PC-3 (cell line): ENCODE measurements at regions of chr14 and their contacts with region 1.

Region 1: DNA sequence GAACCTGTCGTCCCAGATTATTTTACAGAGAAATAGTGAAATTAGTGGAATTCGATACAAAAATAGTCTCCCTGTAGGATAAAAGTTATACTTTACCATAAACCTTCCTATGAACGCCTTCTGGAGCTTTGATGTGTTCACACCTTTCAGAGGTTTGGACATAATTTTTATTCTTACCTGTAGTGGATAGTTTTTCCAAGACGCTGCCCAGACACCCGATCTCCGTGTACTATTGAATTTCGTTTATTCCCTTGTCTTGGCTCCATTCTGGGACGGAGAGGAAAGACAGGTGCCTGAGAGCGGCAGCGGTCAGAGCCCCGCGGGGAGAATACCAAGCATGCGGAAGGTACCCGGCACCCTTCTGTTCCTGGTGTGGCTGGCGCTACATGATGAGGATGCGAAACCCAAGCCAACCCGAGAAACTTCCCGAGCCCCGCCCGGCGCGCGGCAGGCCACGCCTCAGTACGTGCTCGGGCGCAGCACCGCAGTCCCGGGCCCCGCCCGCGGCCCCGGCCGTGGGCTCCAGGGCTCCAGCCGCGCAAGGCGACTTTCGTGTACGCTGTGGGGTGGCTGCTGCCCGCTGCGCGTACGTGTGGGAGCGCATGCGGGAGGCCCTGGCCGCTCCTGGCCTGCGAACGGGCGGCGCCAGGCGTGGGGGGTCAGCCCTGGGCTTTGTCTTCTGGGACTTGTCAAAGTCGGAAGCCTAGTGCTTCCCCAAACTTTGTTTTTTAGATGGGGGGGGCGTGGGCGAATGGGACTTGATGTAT is 11.3 kb upstream of the SNAPC1 start:
- DNase-seq: peak; percentile 99
- ATAC-seq: peak; percentile 79
- H3K4me3 ChIP-seq: peak overlapping the region; percentile 72
- H3K27ac ChIP-seq: peak overlapping the region; percentile 55
- H3K4me1 ChIP-seq: peaks cover 79% of the 10 kb centered on the region
- H3K27me3 ChIP-seq: no peaks in the 10 kb centered on the region
- CTCF ChIP-seq: no peak

Region 2: DNA sequence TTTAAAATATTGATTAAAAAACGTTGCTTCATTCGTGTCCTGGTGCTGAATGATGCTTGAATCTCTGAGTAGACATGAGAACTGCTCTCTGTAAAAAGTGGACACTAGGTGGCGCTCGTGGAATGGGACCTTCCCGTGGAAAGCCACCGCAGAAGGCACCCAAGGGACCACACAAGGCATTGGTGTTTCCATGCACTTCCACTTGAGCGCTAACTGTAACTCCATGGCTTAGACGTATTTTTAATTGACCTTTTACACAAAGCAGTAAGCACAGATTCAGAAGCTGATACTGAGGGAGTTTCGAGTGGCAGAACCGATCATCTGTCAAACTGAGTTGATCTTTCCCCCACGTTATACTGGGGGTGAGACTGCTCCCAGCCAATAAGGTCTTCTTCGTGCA is 294.2 kb before region 1 on chr14:
- CTCF ChIA-PET with region 1: interaction called, 7 read pairs
- POLR2A ChIA-PET with region 1: no interaction called
- intact Hi-C with region 1: loop called (anchors 1 kb)
- DNase-seq: peak; percentile 95
- ATAC-seq: peak; percentile 88
- H3K4me3 ChIP-seq: no peak overlapping the region
- H3K27ac ChIP-seq: no peak overlapping the region
- H3K4me1 ChIP-seq: peaks cover 13% of the 10 kb centered on the region
- H3K27me3 ChIP-seq: no peaks in the 10 kb centered on the region
- CTCF ChIP-seq: peak; percentile 96

Region 3: DNA sequence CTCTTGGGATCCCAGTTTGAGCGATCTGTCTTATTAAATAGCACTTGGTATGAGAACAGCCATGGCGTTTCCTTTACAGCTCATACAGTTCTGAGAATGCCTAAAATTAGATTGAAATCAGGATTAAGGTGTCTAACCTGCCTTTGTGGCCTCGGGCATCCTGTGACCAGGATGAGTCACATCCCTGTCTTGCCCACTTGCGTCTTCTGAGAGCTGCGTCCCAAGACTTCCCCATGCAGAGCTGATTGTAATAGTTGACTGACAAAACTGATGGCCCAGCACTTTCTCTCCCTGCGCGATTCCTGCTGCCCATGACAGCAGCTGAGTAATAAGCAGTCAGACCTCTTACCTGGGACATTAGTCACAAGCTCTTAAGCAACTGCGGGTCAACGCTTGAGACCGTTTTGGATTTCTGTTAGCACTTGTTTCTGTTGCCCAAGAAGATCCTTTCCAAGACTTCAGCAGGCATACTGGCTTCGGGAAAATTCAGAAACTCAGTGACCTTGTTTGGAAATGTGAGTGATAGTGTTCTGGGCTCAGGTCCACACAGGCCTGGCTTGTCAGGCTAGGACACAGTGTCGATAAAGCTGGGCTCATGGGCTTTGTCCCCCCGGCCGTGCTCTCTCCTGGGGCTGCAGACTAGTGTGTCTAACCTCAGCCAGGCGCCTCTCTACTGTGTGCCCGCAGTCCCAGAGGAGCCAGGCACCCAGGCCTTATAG is 225.4 kb before region 1 on chr14:
- CTCF ChIA-PET with region 1: no interaction called
- POLR2A ChIA-PET with region 1: interaction called, 10 read pairs
- intact Hi-C with region 1: no loop called
- DNase-seq: peak; percentile 100
- ATAC-seq: peak; percentile 73
- H3K4me3 ChIP-seq: peak overlapping the region; percentile 27; the same call in 1 of the 2 replicates
- H3K27ac ChIP-seq: peak overlapping the region; percentile 95
- H3K4me1 ChIP-seq: peaks cover 66% of the 10 kb centered on the region
- H3K27me3 ChIP-seq: no peaks in the 10 kb centered on the region
- CTCF ChIP-seq: no peak

Region 4: DNA sequence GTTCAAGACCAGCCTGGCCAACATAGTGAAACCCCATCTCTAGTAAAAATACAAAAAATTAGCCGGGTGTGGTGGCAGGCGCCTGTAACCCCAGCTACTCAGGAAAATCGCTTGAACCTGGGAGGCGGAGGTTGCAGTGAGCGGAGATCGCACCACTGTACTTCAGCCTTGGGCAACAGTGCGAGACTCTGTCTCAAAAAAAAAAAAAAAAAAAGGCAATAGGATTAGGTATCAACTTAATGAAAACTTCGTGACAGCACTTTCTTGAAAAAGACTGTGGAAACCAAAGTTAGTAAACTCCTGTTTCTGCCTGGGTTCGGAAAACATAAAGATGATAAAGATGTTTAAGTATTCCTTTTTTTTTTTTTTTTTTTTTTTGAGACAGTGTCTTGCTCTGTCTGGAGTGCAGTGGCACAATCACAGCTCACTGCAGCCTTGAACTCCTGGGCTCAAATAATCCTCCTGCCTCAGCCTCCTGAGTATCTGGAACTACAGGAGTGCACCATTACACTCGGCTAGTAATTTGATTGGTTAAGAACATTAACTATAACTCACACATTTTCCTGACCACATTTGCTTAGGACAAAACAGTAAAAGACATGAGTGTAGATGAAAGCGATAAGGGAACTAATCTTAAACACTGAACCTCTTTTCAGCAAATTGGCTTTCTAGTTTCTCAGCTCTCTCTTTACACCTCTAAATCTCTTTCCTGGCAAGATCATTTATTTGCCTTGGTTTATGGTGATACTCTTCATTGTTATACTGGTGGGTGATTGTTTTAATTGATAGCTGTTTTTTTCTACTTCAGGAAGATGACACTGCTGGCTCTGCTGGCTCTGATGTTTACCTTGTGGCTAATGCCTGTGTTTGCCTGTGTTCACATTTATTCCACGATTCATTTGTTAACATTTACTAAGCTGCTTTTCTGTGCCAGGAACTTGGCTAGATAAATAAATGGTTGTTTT is 39.8 kb before region 1 on chr14:
- CTCF ChIA-PET with region 1: no interaction called
- POLR2A ChIA-PET with region 1: no interaction called
- intact Hi-C with region 1: loop called (anchors 2 kb)
- DNase-seq: peak; percentile 82
- ATAC-seq: peak; percentile 87
- H3K4me3 ChIP-seq: no peak overlapping the region; the same call in 1 of the 2 replicates
- H3K27ac ChIP-seq: peak overlapping the region; percentile 38
- H3K4me1 ChIP-seq: peaks cover 51% of the 10 kb centered on the region
- H3K27me3 ChIP-seq: no peaks in the 10 kb centered on the region
- CTCF ChIP-seq: no peak

Region 5: GRCh38 chr14:61761959-61762786 is 11.3 kb after region 1 on chr14 and contains the start of gene SNAPC1:
- CTCF ChIA-PET with region 1: interaction called, 4 read pairs
- POLR2A ChIA-PET with region 1: interaction called, 21 read pairs
- intact Hi-C with region 1: loop called (anchors 1 kb)
- DNase-seq: peak; percentile 100
- ATAC-seq: peak; percentile 86
- H3K4me3 ChIP-seq: peak within 1 kb of the TSS; percentile 96
- H3K27ac ChIP-seq: peak within 1 kb of the TSS; percentile 55
- H3K4me1 ChIP-seq: peaks cover 32% of the 10 kb centered on the region
- H3K27me3 ChIP-seq: no peaks in the 10 kb centered on the region
- CTCF ChIP-seq: no peak
- total RNA-seq, gene SNAPC1: 26.7 and 27.3 TPM in 2 replicates

Region 6: DNA sequence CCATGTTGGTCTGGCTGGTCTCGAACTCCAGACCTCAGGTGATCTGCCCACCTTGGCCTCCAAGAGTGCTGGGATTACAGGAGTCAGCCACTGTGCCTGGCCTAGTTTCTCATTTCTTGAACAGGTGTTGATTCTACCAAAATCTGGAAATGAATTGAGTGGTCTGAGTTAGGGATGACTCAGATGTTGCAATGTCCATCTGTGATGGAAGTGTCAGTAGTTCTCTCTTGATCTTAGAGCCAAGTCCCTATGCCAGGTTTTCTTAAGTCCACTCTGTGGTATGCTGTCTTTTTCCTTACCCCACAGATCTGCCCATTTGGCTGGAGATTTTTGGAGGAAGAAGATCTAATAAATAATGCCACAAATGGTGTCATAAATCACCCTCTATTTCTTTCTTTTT is 24.0 kb after region 1 on chr14:
- CTCF ChIA-PET with region 1: no interaction called
- POLR2A ChIA-PET with region 1: no interaction called
- intact Hi-C with region 1: no loop called
- DNase-seq: peak; percentile 35
- ATAC-seq: peak; percentile 60
- H3K4me3 ChIP-seq: no peak overlapping the region
- H3K27ac ChIP-seq: no peak overlapping the region
- H3K4me1 ChIP-seq: peaks cover 4% of the 10 kb centered on the region; the same call in 1 of the 2 replicates
- H3K27me3 ChIP-seq: no peaks in the 10 kb centered on the region
- CTCF ChIP-seq: no peak

Region 7: GRCh38 chr14:61803755-61804154 is 52.9 kb after region 1 on chr14:
- CTCF ChIA-PET with region 1: no interaction called
- POLR2A ChIA-PET with region 1: no interaction called
- intact Hi-C with region 1: no loop called
- DNase-seq: no peak
- ATAC-seq: no peak
- H3K4me3 ChIP-seq: no peak overlapping the region
- H3K27ac ChIP-seq: no peak overlapping the region
- H3K4me1 ChIP-seq: no peaks in the 10 kb centered on the region
- H3K27me3 ChIP-seq: no peaks in the 10 kb centered on the region
- CTCF ChIP-seq: no peak